ENCODE measurements at regions of chr22 and their contacts with region 1.

Region 1: DNA sequence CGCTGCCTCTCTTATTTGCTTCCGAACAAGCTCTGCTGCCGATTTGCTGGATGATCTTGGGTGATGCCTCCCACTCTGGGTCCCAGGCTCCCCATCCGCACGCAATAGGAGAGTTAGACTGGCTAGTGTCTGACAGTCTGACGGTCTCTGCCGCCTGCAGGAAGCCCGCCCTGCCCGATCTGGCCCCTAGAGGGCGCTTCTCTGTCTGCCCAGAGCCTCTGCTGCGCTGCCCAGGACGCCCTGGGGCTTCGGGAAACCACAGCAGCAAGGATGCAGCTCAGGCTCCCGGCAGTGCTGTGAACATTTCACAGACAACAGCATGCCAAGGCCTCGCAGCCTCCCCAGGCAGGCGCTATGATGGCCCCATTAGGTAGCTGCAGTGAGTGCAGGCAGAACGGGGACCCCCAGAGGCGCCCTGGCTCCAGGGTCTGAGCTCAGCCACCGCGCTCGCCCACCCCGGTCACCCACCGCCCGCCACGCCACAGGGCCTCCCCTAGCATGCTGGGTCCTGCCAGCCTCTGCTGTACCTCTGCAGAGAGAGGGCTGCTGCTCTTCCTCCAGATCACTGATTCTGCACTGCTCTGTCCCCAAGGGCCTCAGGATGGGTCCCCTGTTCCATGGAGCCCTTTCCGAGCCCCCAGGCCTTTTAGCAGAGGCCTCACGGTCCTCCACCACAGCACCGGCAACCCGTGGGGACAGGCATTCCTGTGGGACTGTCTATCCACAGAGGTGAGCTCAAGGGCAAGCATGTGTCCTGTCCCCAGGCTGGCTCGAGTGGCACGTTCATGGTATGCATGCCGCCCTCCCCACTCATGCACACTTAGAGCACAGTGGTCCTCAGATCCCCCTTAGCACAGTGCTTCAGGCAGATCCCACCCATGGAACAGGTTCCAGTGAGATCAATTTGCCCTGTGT is 4.3 kb upstream of the BAIAP2L2 start:
- DNase-seq: peak; percentile 65 to 84 (median 79)
- H3K4me3 ChIP-seq: no peak overlapping the region
- H3K27ac ChIP-seq: no peak overlapping the region
- H3K4me1 ChIP-seq: peaks cover 0 to 3% (median 0%) of the 10 kb centered on the region in 4 experiments
- H3K27me3 ChIP-seq: no peaks in the 10 kb centered on the region

Region 2: GRCh38 chr22:37940698-37941376 is 173.9 kb before region 1 on chr22:
- CTCF ChIA-PET with region 1: no interaction called
- POLR2A ChIA-PET with region 1: no interaction called
- DNase-seq: peak in 2 of 3 donors; percentile 47 to 50
- H3K4me3 ChIP-seq: no peak overlapping the region
- H3K27ac ChIP-seq: peak overlapping the region in 1 of 2 experiments; percentile 43
- H3K4me1 ChIP-seq: peaks cover 0 to 5% (median 0%) of the 10 kb centered on the region in 4 experiments
- H3K27me3 ChIP-seq: no peaks in the 10 kb centered on the region

Region 3: DNA sequence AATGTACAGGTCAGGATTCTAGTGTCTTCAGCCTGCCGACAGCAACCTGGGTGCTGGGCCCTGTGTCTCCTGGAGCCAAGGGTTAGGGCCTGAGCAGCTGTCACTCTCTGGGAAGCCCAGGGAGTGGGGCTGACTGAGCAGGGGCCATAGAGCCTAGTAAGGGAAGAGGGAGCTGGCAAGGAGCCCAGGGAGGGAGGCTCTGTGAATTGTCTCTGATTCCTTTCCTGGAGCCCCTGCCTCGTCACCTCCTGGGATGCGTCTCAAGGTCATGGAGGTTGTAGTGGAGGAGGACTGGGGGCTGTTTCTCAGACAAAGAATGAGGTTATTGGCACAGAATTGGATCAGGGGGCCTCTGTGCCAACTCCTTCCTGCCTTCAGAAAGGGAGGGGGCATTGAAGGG is 142.2 kb before region 1 on chr22:
- CTCF ChIA-PET with region 1: no interaction called
- POLR2A ChIA-PET with region 1: no interaction called
- DNase-seq: no peak
- H3K4me3 ChIP-seq: no peak overlapping the region
- H3K27ac ChIP-seq: no peak overlapping the region
- H3K4me1 ChIP-seq: no peaks in the 10 kb centered on the region
- H3K27me3 ChIP-seq: no peaks in the 10 kb centered on the region

Region 4: DNA sequence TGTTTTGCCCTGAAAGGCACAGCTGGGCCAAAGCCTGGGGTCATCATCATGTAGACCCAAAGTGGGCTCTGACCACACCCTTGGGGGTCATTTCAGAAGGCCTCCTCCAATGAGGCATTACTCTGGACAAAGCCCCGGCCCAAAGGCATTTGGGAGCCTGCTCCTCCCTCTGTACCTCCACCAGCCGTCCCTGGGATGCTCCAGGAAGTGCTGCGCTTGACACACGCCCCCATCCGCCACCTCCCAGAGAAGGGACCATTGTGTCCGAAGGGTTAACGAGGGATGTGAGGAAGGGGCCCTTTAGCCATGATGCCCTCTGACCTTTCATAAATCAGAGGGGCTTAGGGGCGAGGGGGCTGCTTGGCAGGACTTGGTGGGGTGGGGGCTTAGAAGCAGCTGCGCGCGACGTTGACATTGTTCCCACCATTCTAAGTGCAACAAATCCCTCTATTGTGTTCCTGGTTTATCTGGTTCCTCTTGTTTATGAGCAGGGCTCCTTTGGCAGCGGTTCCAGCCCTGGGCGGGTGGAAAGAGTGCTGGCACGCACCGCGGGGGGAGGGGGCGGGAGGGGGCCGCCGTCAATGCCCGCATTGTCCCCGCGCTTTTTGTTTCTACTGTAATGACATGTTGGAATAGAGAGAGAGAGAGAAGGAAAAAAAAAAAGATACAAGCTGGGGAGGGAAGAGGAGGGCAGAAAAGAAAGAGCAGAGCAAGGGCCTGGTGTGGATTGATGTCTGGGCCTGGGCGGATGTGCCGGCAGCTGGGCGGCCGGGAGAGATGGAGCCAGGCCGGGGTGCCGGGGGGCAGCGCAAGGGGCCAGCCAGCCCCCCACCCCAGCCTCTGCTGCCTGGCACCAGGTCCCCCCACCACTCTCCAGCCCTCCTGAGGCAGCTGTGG is 98.3 kb before region 1 on chr22:
- CTCF ChIA-PET with region 1: no interaction called
- POLR2A ChIA-PET with region 1: no interaction called
- DNase-seq: peak; percentile 19 to 27 (median 25)
- H3K4me3 ChIP-seq: no peak overlapping the region
- H3K27ac ChIP-seq: no peak overlapping the region
- H3K4me1 ChIP-seq: peaks cover 0 to 20% (median 11%) of the 10 kb centered on the region in 4 experiments
- H3K27me3 ChIP-seq: no peaks in the 10 kb centered on the region

Region 5: DNA sequence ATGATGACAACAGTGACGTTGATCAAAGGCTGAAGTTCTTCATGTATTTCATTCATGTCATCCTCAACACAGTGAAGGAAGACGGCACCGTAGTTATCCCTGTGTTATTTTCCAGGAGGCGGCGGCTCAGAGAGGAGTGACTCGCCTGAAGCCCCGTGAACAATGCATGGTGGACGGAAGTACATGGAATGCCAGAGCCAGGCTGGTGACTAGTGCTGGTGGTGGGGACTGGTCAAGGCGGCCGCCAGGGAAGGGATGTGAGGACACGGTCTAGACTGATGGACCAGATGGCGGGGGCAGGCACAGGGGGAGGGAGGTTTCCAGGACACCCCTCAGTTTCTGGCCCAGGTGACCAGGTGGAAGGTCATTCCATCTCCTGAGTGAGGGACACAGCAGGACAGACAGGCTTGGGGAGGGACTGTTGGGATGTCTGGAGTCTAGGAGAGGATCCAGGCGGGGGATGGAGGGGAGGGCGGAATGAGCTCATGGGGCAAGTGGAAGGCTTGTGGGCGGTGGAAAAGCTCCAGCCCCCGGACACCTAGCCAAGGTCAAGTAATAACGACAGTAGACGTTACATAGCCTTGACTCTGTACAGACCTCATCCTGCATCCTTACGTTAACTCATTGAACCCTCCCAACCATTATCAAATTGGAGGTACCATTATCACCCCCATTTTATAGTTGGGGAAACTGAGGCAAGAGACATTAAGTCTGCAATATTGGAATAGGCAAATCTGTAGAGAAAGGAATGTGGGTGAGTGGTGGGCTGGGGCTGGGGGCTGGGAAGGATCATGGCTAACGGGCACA is 73.6 kb before region 1 on chr22:
- CTCF ChIA-PET with region 1: no interaction called
- POLR2A ChIA-PET with region 1: no interaction called
- DNase-seq: no peak
- H3K4me3 ChIP-seq: no peak overlapping the region
- H3K27ac ChIP-seq: no peak overlapping the region
- H3K4me1 ChIP-seq: peaks cover 4 to 20% (median 13%) of the 10 kb centered on the region in 4 experiments
- H3K27me3 ChIP-seq: no peaks in the 10 kb centered on the region

Region 6: GRCh38 chr22:38230108-38230825 is 115.5 kb after region 1 on chr22:
- CTCF ChIA-PET with region 1: interaction called, 44 read pairs
- POLR2A ChIA-PET with region 1: no interaction called
- DNase-seq: peak; percentile 77 to 88 (median 85)
- H3K4me3 ChIP-seq: no peak overlapping the region
- H3K27ac ChIP-seq: no peak overlapping the region
- H3K4me1 ChIP-seq: peaks cover 0 to 11% (median 8%) of the 10 kb centered on the region in 4 experiments
- H3K27me3 ChIP-seq: no peaks in the 10 kb centered on the region

Measured in common myeloid progenitor, CD34-positive (primary cell).